AG04450 (cell line): ENCODE measurements at regions of chr1 and their contacts with region 1.

Region 1: GRCh38 chr1:212749821-212750535 is 41.6 kb downstream of the NSL1 start:
- DNase-seq: peak; percentile 54
- H3K4me3 ChIP-seq: no peak overlapping the region
- H3K27ac ChIP-seq: peak overlapping the region; percentile 67
- H3K27me3 ChIP-seq: no peaks in the 10 kb centered on the region
- CTCF ChIP-seq: peak; percentile 81

Region 2: DNA sequence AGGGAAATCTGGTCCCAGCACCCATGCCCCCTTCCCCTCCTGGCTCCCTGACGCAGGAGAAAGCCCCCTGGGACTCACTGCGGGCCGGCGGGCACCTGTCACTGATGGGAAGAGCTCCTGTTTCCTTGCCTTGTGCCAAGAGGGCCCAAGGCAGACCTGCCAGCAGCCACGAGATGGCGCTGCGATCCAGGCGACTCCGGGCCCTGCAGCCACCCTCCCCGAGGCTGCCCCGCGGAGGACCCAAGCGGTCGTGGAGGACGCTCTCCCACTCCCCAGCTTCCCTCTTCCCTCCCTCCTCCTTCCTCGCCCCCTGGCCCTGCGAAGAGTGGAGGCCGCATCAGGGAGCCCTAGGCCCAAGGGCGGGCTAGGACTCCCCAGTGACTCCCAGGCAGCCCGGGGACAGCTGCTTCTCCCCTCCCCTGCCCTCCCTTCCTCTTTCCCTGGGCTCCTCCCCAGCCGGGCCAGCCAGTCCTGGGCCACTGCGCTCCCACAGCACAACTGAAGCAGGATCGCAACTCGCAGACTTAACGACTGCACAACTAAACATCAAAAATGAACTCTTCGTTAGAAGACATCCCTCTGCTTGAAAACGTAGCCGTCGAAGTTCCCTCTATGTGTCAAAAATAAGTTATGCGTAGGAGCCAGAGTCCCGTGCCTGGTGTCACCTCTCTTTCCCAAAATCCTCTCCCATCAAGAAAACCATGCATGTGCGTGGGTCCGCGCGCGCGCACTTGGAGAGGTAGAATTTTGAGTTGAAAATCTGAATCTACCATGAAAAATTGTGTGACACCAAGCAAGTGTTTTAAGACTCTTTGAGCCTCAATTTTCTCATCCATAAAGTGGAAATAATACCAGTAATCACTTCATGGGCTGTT is 84.5 kb before region 1 on chr1:
- CTCF ChIA-PET with region 1: interaction called, 59 read pairs
- POLR2A ChIA-PET with region 1: no interaction called
- DNase-seq: peak; percentile 41
- H3K4me3 ChIP-seq: peak overlapping the region; percentile 82
- H3K27ac ChIP-seq: peak overlapping the region; percentile 21
- H3K27me3 ChIP-seq: no peaks in the 10 kb centered on the region
- CTCF ChIP-seq: peak; percentile 92

Region 3: GRCh38 chr1:212716161-212716560 is 33.8 kb before region 1 on chr1:
- CTCF ChIA-PET with region 1: interaction called, 14 read pairs
- POLR2A ChIA-PET with region 1: no interaction called
- DNase-seq: no peak
- H3K4me3 ChIP-seq: no peak overlapping the region
- H3K27ac ChIP-seq: no peak overlapping the region
- H3K27me3 ChIP-seq: no peaks in the 10 kb centered on the region
- CTCF ChIP-seq: no peak

Region 4: DNA sequence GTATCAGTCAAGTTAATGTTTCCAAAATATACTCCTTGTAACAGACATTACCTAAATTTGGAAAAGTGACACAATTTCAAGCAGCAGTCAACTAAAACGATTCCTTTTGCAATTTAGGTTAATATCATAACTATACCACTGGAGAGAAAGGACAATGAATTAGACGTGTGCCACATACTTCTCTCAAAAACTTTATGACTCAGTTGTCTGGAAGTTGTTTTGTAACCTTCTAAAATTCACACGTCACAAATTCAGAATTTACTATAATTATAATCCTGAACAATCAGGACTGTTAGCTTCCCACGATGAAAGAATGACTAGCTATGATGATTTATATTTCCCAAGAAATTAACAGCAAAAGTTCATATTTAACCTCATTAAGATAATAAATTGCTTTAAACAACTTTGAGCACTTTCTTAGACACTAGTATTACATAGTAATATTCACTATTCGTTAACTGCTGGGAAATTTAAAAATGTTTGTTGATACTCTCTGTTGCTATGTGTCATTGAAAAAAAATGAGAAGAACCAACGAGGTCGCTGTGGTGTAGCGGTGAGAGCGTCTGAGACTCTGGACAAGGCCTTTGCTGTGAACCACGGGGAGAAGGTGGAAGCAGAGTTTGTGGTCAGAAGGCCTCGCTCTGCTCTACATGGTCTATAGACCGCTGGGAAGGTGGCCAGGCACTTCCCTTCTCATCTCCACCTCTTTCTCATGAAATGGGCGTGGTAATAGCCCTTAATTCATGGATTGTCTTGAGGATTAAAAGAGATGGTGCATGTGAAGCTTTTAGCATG is 22.4 kb before region 1 on chr1:
- CTCF ChIA-PET with region 1: interaction called, 12 read pairs
- POLR2A ChIA-PET with region 1: no interaction called
- DNase-seq: no peak
- H3K4me3 ChIP-seq: no peak overlapping the region
- H3K27ac ChIP-seq: no peak overlapping the region
- H3K27me3 ChIP-seq: no peaks in the 10 kb centered on the region
- CTCF ChIP-seq: no peak

Region 5: DNA sequence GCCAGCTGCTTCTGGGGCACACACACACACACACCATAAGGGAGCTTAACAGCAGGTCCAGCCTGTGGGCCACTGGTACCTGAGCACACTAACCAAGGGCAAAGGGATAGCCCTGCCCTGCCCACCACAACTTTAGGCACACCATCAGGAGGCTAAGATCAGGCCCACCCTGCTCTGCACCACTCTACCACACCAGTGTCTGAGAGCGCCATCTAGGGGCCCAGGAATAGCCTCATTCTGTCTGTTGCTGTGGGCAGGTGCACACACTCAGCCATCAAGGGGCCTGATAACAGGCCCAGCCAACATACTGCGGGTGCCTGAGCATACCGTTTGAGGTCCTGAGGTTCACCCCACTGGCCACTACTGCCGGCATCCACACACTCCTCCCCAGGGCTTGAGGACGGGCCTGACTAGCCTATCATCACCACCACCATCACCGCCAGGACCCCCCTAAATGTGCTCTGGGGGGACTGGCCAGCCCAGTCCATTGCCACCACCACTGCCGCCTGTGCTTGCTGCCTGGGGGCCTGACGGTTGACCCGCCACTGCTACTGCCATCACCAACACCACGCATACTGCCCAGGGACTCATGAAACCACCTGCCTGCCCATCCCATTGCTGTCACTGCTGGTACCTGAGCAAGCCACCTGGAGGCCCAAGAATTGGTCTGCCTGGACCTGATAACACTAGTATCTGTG is 10.3 kb after region 1 on chr1:
- CTCF ChIA-PET with region 1: interaction called, 66 read pairs
- POLR2A ChIA-PET with region 1: no interaction called
- DNase-seq: no peak
- H3K4me3 ChIP-seq: no peak overlapping the region
- H3K27ac ChIP-seq: no peak overlapping the region
- H3K27me3 ChIP-seq: no peaks in the 10 kb centered on the region
- CTCF ChIP-seq: peak; percentile 29

Region 6: GRCh38 chr1:212782422-212783154 is 32.6 kb after region 1 on chr1:
- CTCF ChIA-PET with region 1: interaction called, 18 read pairs
- POLR2A ChIA-PET with region 1: no interaction called
- DNase-seq: no peak
- H3K4me3 ChIP-seq: no peak overlapping the region
- H3K27ac ChIP-seq: no peak overlapping the region
- H3K27me3 ChIP-seq: no peaks in the 10 kb centered on the region
- CTCF ChIP-seq: peak; percentile 65